Activated CD4-positive, alpha-beta memory T cell treated with anti-CD3 and anti-CD28 coated beads for 36 hours (primary cell): ENCODE measurements at regions of chr1 and their contacts with region 1.

Region 1: GRCh38 chr1:193456811-193457280 is 270.4 kb upstream of the B3GALT2 start:
- DNase-seq: no peak
- H3K4me3 Mint-ChIP-seq: no peak overlapping the region
- H3K27ac Mint-ChIP-seq: no peak overlapping the region
- H3K4me1 Mint-ChIP-seq: peaks cover 29% of the 10 kb centered on the region
- H3K27me3 Mint-ChIP-seq: no peaks in the 10 kb centered on the region

Region 2: GRCh38 chr1:193183019-193183627 is 273.7 kb before region 1 on chr1:
- CTCF ChIA-PET with region 1: interaction called, 5 read pairs
- POLR2A ChIA-PET with region 1: no interaction called
- intact Hi-C with region 1: loop called (anchors 10 kb)
- DNase-seq: no peak
- H3K4me3 Mint-ChIP-seq: no peak overlapping the region
- H3K27ac Mint-ChIP-seq: no peak overlapping the region
- H3K4me1 Mint-ChIP-seq: peaks cover 41% of the 10 kb centered on the region
- H3K27me3 Mint-ChIP-seq: no peaks in the 10 kb centered on the region

Region 3: GRCh38 chr1:193264313-193265065 is 192.4 kb before region 1 on chr1:
- CTCF ChIA-PET with region 1: no interaction called
- POLR2A ChIA-PET with region 1: no interaction called
- intact Hi-C with region 1: no loop called
- DNase-seq: no peak
- H3K4me3 Mint-ChIP-seq: no peak overlapping the region
- H3K27ac Mint-ChIP-seq: no peak overlapping the region
- H3K4me1 Mint-ChIP-seq: no peaks in the 10 kb centered on the region
- H3K27me3 Mint-ChIP-seq: no peaks in the 10 kb centered on the region

Region 4: DNA sequence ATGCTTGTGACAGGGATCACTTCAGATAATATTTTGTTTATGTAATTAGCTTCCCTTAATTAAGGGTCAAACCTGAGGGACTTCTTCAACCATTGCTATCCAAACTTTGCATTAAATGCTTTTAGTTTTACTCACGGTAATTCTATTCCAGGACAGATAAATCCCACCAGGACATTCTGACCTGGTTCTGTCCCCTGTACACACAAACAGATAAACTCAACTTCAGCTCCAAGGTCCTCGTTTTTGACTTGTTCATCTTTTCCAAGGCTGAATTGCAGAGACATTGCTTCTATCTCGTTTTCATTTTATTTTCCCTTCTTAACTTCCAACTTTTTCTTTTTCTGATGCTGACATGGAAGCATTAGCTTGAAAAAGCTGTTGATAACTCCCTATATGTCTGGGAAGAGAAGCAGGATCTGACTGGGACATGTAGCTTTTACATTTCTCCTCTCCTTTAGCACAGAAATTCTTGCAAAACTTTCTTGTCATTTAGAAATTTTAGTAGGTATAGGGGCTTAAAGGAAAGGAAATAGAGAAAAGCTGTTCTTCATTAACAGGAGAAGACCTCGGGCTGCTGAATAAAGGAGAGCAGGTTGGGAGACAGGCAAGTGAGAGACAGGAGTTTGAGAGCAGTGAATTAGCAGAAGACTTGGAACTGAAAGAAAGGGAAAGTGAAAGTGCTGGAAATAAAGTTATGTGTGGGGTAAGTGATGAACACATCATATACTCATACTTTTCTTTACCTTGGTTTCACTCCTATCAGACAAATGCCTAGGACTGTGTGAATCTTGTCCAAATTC is 38.7 kb before region 1 on chr1:
- CTCF ChIA-PET with region 1: interaction called, 3 read pairs
- POLR2A ChIA-PET with region 1: no interaction called
- intact Hi-C with region 1: loop called (anchors 1 kb)
- DNase-seq: no peak
- H3K4me3 Mint-ChIP-seq: peak overlapping the region; percentile 21
- H3K27ac Mint-ChIP-seq: peak overlapping the region; percentile 24
- H3K4me1 Mint-ChIP-seq: peaks cover 30% of the 10 kb centered on the region
- H3K27me3 Mint-ChIP-seq: no peaks in the 10 kb centered on the region

Region 5: DNA sequence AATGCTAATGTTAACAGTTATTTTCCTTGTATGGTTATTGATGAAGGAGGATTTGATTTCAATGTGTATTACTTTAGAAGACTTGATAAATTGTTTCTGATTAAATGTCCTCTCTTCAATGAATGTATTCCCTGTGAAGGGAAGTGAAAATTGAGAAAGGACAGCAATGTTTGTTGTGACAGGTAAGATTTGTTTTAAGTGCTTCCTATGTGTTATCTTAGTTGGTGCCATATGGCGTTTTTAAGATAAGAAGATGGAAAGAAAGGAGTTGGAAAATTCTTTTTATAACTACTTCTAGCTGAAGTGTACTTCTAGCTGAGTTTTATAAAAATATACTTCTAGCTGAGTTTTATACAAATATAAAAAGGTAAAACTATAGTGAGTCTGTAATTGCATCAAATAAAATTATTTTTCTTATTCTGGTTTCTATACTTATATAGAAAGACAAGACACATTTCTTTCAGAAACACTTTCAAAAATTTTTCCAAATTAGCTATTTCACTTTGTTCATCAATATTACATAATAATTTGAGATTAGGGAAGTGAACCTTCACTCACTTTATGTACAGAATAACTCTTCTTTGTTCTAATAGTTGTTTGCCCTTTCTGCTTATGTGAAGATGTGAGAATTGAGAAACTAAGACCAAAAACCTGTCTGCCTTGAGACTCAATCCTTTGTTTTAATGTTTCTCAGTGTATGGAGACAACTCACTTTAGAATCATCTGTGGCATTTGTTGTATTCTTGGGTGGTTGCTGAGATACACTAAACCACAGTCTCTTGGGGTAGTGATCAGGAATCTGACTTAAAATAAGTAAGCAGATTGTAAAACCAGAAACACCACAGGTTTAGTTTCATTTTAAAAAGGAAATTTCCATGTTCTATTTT is 112.5 kb after region 1 on chr1:
- CTCF ChIA-PET with region 1: no interaction called
- POLR2A ChIA-PET with region 1: interaction called, 3 read pairs
- intact Hi-C with region 1: loop called (anchors 1 kb)
- DNase-seq: no peak
- H3K4me3 Mint-ChIP-seq: no peak overlapping the region
- H3K27ac Mint-ChIP-seq: peak overlapping the region; percentile 73
- H3K4me1 Mint-ChIP-seq: peaks cover 29% of the 10 kb centered on the region
- H3K27me3 Mint-ChIP-seq: no peaks in the 10 kb centered on the region

Region 6: GRCh38 chr1:193700710-193701355 is 244.0 kb after region 1 on chr1:
- CTCF ChIA-PET with region 1: no interaction called
- POLR2A ChIA-PET with region 1: no interaction called
- intact Hi-C with region 1: loop called (anchors 1 kb)
- DNase-seq: no peak
- H3K4me3 Mint-ChIP-seq: no peak overlapping the region
- H3K27ac Mint-ChIP-seq: peak overlapping the region; percentile 40
- H3K4me1 Mint-ChIP-seq: peaks cover 21% of the 10 kb centered on the region
- H3K27me3 Mint-ChIP-seq: no peaks in the 10 kb centered on the region

Region 7: DNA sequence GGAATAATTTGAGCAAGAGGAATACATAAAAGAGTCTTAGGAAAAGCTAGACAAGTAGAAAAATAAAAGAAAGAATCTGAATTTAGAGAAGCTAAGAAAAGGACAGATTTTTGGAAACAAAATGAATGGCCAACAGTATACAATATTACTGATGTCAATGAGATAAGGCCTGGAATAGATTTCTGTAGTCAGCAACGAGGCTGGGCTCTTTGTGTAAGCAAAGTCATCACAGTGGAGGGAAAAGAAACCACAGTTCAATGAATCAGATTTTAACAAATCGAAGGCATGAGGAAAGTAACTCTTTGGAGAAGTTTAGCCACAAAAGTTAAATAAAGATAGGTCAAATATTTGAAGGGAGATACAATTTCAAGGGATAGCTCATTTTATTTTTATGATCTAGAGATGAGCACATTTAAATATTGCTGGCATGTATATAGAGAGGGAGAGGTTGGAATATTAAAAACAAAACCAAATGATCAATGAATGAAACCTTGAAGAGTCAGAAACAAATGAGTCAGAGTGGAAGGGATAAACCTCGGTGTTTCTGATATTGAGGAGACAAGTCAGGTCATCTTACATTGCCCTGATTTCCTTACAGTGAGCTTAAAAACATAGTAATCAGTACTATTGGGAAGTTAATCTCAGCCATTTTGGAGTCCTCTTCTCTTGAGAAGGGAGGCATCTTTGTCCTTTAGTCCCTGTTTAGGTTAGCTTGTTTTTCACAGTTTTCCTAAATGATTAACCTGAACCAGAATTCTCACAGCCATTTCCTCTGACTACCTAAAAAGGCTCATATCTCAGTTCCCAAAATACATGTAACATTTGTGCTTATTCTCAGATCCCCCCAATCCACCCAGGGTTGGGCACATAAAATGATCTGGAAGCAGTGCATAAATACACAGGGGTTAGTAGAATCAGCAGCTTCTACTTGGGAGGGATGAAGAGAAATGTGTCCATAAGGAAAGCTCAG is 349.5 kb after region 1 on chr1:
- CTCF ChIA-PET with region 1: no interaction called
- POLR2A ChIA-PET with region 1: no interaction called
- intact Hi-C with region 1: loop called (anchors 1 kb)
- DNase-seq: no peak
- H3K4me3 Mint-ChIP-seq: no peak overlapping the region
- H3K27ac Mint-ChIP-seq: no peak overlapping the region
- H3K4me1 Mint-ChIP-seq: peaks cover 12% of the 10 kb centered on the region
- H3K27me3 Mint-ChIP-seq: no peaks in the 10 kb centered on the region